ENCODE measurements at regions of chr7 and their contacts with region 1.

Region 1: GRCh38 chr7:128883622-128884501 is 21.2 kb downstream of the ATP6V1F start:
- DNase-seq: peak; percentile 87
- ATAC-seq: peak; percentile 88
- H3K4me3 ChIP-seq: peak overlapping the region in 4 of 5 experiments; percentile 33 to 59 (median 40)
- H3K4me3 Mint-ChIP-seq: peak overlapping the region; percentile 44
- H3K27ac ChIP-seq: no peak overlapping the region
- H3K27ac Mint-ChIP-seq: peak overlapping the region; percentile 53
- H3K4me1 ChIP-seq: peaks cover 0 to 6% of the 10 kb centered on the region in 2 donors
- H3K4me1 Mint-ChIP-seq: peaks cover 3% of the 10 kb centered on the region
- H3K27me3 ChIP-seq: peaks cover 0 to 18% (median 3%) of the 10 kb centered on the region in 4 experiments
- H3K27me3 Mint-ChIP-seq: peaks cover 4% of the 10 kb centered on the region
- CTCF ChIP-seq: peak; percentile 97

Region 2: GRCh38 chr7:128791121-128791961 is 92.5 kb before region 1 on chr7:
- CTCF ChIA-PET with region 1: interaction called, 4 read pairs
- POLR2A ChIA-PET with region 1: no interaction called
- intact Hi-C with region 1: loop called (anchors 1 kb)
- DNase-seq: peak; percentile 83
- ATAC-seq: peak; percentile 89
- H3K4me3 ChIP-seq: peak overlapping the region; percentile 38 to 87 (median 71)
- H3K4me3 Mint-ChIP-seq: peak overlapping the region; percentile 84
- H3K27ac ChIP-seq: no peak overlapping the region
- H3K27ac Mint-ChIP-seq: no peak overlapping the region
- H3K4me1 ChIP-seq: peaks cover 9 to 15% of the 10 kb centered on the region in 2 donors
- H3K4me1 Mint-ChIP-seq: peaks cover 9% of the 10 kb centered on the region
- H3K27me3 ChIP-seq: no peaks in the 10 kb centered on the region
- H3K27me3 Mint-ChIP-seq: no peaks in the 10 kb centered on the region
- CTCF ChIP-seq: no peak

Region 3: GRCh38 chr7:128827248-128827958 is 56.5 kb before region 1 on chr7:
- CTCF ChIA-PET with region 1: no interaction called
- POLR2A ChIA-PET with region 1: no interaction called
- intact Hi-C with region 1: no loop called
- DNase-seq: no peak
- ATAC-seq: no peak
- H3K4me3 ChIP-seq: no peak overlapping the region
- H3K4me3 Mint-ChIP-seq: no peak overlapping the region
- H3K27ac ChIP-seq: no peak overlapping the region
- H3K27ac Mint-ChIP-seq: no peak overlapping the region
- H3K4me1 ChIP-seq: peaks cover 28 to 30% of the 10 kb centered on the region in 2 donors
- H3K4me1 Mint-ChIP-seq: peaks cover 20% of the 10 kb centered on the region
- H3K27me3 ChIP-seq: peaks cover 0 to 46% (median 20%) of the 10 kb centered on the region in 4 experiments
- H3K27me3 Mint-ChIP-seq: peaks cover 43% of the 10 kb centered on the region
- CTCF ChIP-seq: no peak

Region 4: GRCh38 chr7:128841921-128842651 is 41.8 kb before region 1 on chr7:
- CTCF ChIA-PET with region 1: interaction called, 21 read pairs
- POLR2A ChIA-PET with region 1: no interaction called
- intact Hi-C with region 1: loop called (anchors 1 kb)
- DNase-seq: peak; percentile 74
- ATAC-seq: peak; percentile 61
- H3K4me3 ChIP-seq: no peak overlapping the region
- H3K4me3 Mint-ChIP-seq: no peak overlapping the region
- H3K27ac ChIP-seq: no peak overlapping the region
- H3K27ac Mint-ChIP-seq: no peak overlapping the region
- H3K4me1 ChIP-seq: peaks cover 0 to 11% of the 10 kb centered on the region in 2 donors
- H3K4me1 Mint-ChIP-seq: peaks cover 4% of the 10 kb centered on the region
- H3K27me3 ChIP-seq: no peaks in the 10 kb centered on the region
- H3K27me3 Mint-ChIP-seq: no peaks in the 10 kb centered on the region
- CTCF ChIP-seq: peak; percentile 81

Region 5: GRCh38 chr7:128911423-128912031 is 27.7 kb after region 1 on chr7:
- CTCF ChIA-PET with region 1: no interaction called
- POLR2A ChIA-PET with region 1: no interaction called
- intact Hi-C with region 1: no loop called
- DNase-seq: no peak
- ATAC-seq: no peak
- H3K4me3 ChIP-seq: no peak overlapping the region
- H3K4me3 Mint-ChIP-seq: no peak overlapping the region
- H3K27ac ChIP-seq: no peak overlapping the region
- H3K27ac Mint-ChIP-seq: no peak overlapping the region
- H3K4me1 ChIP-seq: peaks cover 27 to 30% of the 10 kb centered on the region in 2 donors
- H3K4me1 Mint-ChIP-seq: peaks cover 24% of the 10 kb centered on the region
- H3K27me3 ChIP-seq: peaks cover 0 to 46% (median 18%) of the 10 kb centered on the region in 4 experiments
- H3K27me3 Mint-ChIP-seq: peaks cover 34% of the 10 kb centered on the region
- CTCF ChIP-seq: no peak

Region 6: DNA sequence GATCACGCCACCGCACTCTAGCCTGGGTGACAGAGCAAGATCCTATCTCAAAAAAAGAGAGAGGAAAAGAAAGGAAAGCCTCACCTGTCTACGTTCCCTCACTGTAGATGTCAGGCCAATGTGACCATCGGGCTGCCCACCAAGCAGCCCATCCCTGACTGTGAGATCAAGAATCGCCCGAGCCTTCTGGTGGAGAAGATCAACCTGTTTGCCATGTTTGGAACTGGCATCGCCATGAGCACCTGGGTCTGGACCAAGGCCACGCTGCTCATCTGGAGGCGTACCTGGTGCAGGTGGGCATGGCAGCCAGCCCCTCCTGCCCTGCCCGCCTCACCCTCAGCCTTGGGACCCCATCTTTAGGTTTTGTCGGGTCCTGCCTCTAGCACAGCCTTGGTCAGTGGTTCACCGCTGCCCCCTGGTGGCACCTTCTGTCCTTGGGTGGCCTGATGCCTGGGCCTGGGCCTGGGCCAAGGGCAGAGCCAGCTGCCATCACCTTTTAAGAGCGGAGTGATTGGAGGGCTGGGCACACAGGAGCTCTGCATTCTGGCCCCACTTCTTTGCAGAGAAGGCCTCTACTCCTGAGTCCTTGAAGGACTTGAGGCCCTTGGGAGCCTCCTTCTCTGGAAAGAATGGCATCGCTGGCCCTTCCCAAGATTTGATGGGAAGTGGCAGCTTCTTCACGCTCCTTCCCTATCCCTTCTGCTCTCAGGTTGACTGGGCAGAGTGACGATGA is 326.6 kb after region 1 on chr7:
- CTCF ChIA-PET with region 1: interaction called, 13 read pairs
- POLR2A ChIA-PET with region 1: no interaction called
- intact Hi-C with region 1: no loop called
- DNase-seq: peak; percentile 82
- ATAC-seq: peak; percentile 90
- H3K4me3 ChIP-seq: no peak overlapping the region
- H3K4me3 Mint-ChIP-seq: no peak overlapping the region
- H3K27ac ChIP-seq: no peak overlapping the region
- H3K27ac Mint-ChIP-seq: no peak overlapping the region
- H3K4me1 ChIP-seq: no peaks in the 10 kb centered on the region
- H3K4me1 Mint-ChIP-seq: peaks cover 3% of the 10 kb centered on the region
- H3K27me3 ChIP-seq: no peaks in the 10 kb centered on the region
- H3K27me3 Mint-ChIP-seq: no peaks in the 10 kb centered on the region
- CTCF ChIP-seq: peak; percentile 84